ENCODE measurements at regions of chr18 and their contacts with region 1.

Region 1: GRCh38 chr18:7177116-7177744 is 53.7 kb upstream of the LRRC30 start:
- DNase-seq: peak; percentile 85
- ATAC-seq: peak; percentile 100
- H3K4me3 ChIP-seq: no peak overlapping the region
- H3K27ac ChIP-seq: no peak overlapping the region
- H3K4me1 ChIP-seq: no peaks in the 10 kb centered on the region; the same call in 1 of the 2 replicates
- H3K27me3 ChIP-seq: no peaks in the 10 kb centered on the region; the same call in 1 of the 2 replicates
- CTCF ChIP-seq: peak; percentile 80
- POLR2A ChIP-seq: no peak
- RAD21 ChIP-seq: peak; percentile 91

Region 2: GRCh38 chr18:5879479-5879882 is 1297.7 kb before region 1 on chr18:
- CTCF ChIA-PET with region 1: no interaction called
- POLR2A ChIA-PET with region 1: no interaction called
- dilution Hi-C with region 1: no loop called
- in situ Hi-C with region 1: no loop called
- intact Hi-C with region 1: loop called (anchors 10 kb)
- DNase-seq: peak; percentile 65
- ATAC-seq: peak; percentile 89
- H3K4me3 ChIP-seq: no peak overlapping the region
- H3K27ac ChIP-seq: no peak overlapping the region
- H3K4me1 ChIP-seq: no peaks in the 10 kb centered on the region
- H3K27me3 ChIP-seq: peaks cover 3% of the 10 kb centered on the region
- CTCF ChIP-seq: peak; percentile 93
- POLR2A ChIP-seq: no peak
- RAD21 ChIP-seq: peak; percentile 93

Region 3: DNA sequence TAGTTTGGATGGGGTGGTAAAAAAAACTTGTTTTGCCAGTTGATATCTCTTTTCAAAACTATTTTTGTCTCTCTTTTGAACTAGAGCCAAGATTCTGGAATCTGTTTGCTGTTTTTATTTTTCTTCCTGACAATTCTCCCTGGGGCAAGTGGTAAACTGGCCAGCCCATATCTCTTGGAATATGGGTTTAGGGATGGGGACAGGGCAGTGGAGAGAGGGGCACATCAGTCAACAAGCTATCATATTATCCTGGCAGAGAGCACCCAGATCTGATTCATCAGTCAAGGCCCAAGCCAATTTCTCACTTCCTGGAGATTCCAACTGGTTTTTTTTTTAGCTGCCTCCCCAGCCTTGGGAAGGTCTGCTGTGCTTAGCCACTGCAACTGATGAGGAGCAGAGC is 395.4 kb before region 1 on chr18:
- CTCF ChIA-PET with region 1: no interaction called
- POLR2A ChIA-PET with region 1: no interaction called
- dilution Hi-C with region 1: no loop called
- in situ Hi-C with region 1: no loop called
- intact Hi-C with region 1: no loop called
- DNase-seq: peak; percentile 65
- ATAC-seq: peak; percentile 56
- H3K4me3 ChIP-seq: no peak overlapping the region
- H3K27ac ChIP-seq: peak overlapping the region; percentile 77; the same call in 1 of the 2 replicates
- H3K4me1 ChIP-seq: peaks cover 26% of the 10 kb centered on the region
- H3K27me3 ChIP-seq: no peaks in the 10 kb centered on the region
- CTCF ChIP-seq: no peak
- POLR2A ChIP-seq: no peak
- RAD21 ChIP-seq: no peak

Region 4: GRCh38 chr18:6920099-6920899 is 256.9 kb before region 1 on chr18:
- CTCF ChIA-PET with region 1: interaction called, 3 read pairs
- POLR2A ChIA-PET with region 1: no interaction called
- dilution Hi-C with region 1: no loop called
- in situ Hi-C with region 1: loop called (anchors 5 kb)
- intact Hi-C with region 1: loop called (anchors 1 kb)
- DNase-seq: peak; percentile 68
- ATAC-seq: peak; percentile 85
- H3K4me3 ChIP-seq: no peak overlapping the region
- H3K27ac ChIP-seq: no peak overlapping the region
- H3K4me1 ChIP-seq: no peaks in the 10 kb centered on the region
- H3K27me3 ChIP-seq: no peaks in the 10 kb centered on the region; the same call in 1 of the 2 replicates
- CTCF ChIP-seq: peak; percentile 82
- POLR2A ChIP-seq: no peak
- RAD21 ChIP-seq: peak; percentile 76

Region 5: DNA sequence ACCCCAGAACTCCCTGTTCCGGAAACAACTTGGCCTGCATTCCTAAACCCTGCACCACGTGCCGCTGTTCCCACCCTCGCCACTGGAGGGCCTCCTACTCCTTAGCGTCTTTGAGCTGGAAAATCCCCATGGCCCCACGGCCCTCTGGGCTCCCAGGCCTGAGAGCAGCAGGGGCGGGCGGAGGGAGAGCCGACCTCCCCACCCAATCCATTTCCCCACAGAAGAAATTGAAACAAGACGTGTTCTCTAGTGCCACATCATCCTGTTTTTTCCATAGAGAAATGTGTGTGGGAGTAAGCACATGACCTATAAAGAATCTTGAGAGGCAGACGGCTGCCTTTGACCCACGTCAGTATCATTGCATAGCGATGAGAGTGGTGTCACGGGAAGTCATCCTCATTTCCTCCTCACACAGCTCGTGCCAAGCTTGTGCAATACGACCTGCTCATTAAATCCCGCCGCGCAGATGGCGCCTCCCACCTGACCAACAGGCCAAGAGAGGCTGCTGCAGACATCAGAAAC is 138.8 kb before region 1 on chr18:
- CTCF ChIA-PET with region 1: interaction called, 21 read pairs
- POLR2A ChIA-PET with region 1: no interaction called
- dilution Hi-C with region 1: no loop called
- in situ Hi-C with region 1: loop called (anchors 5 kb)
- intact Hi-C with region 1: loop called (anchors 1 kb)
- DNase-seq: peak; percentile 99
- ATAC-seq: peak; percentile 96
- H3K4me3 ChIP-seq: peak overlapping the region; percentile 2; the same call in 1 of the 2 replicates
- H3K27ac ChIP-seq: peak overlapping the region; percentile 93
- H3K4me1 ChIP-seq: peaks cover 10% of the 10 kb centered on the region
- H3K27me3 ChIP-seq: no peaks in the 10 kb centered on the region
- CTCF ChIP-seq: peak; percentile 89
- POLR2A ChIP-seq: no peak
- RAD21 ChIP-seq: peak; percentile 82

Region 6: GRCh38 chr18:7117390-7118355 is 59.6 kb before region 1 on chr18 and contains the start of gene LAMA1:
- CTCF ChIA-PET with region 1: no interaction called
- POLR2A ChIA-PET with region 1: no interaction called
- dilution Hi-C with region 1: no loop called
- in situ Hi-C with region 1: no loop called
- intact Hi-C with region 1: loop called (anchors 2 kb)
- DNase-seq: peak; percentile 10
- ATAC-seq: peak; percentile 89
- H3K4me3 ChIP-seq: peak within 1 kb of the TSS; percentile 65
- H3K27ac ChIP-seq: no peak within 1 kb of the TSS; the same call in 1 of the 2 replicates
- H3K4me1 ChIP-seq: 0 out of 2 replicates have a peak, but pooled peaks cover 2% of the 10 kb centered on the region
- H3K27me3 ChIP-seq: peaks cover 3% of the 10 kb centered on the region; the same call in 1 of the 2 replicates
- CTCF ChIP-seq: no peak
- POLR2A ChIP-seq: no peak
- RAD21 ChIP-seq: no peak
- total RNA-seq, gene LAMA1: 10.9 and 11.4 TPM in 2 replicates

Region 7: DNA sequence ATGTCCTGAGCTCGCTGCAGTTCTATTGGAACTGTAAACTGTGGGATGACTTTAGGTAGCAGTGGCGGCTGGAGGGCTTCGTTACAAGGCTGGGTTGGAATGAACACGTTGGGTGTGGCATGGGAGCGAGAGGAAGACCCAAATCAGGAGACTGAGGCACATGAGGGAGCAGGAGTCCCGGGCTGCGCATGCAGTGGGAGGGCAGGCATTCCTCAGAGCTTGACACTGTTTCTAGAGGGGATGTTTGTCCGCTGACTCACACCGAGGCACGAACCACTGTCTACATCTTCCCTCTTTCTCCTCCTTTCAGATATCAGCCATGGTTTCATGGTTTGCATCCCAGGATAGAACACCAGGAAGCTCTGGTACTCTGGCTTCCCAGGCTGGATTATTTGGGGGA is 19.0 kb before region 1 on chr18:
- CTCF ChIA-PET with region 1: interaction called, 4 read pairs
- POLR2A ChIA-PET with region 1: interaction called, 10 read pairs
- dilution Hi-C with region 1: no loop called
- in situ Hi-C with region 1: no loop called
- intact Hi-C with region 1: no loop called
- DNase-seq: peak; percentile 79
- ATAC-seq: peak; percentile 90
- H3K4me3 ChIP-seq: no peak overlapping the region
- H3K27ac ChIP-seq: no peak overlapping the region
- H3K4me1 ChIP-seq: peaks cover 11% of the 10 kb centered on the region
- H3K27me3 ChIP-seq: no peaks in the 10 kb centered on the region
- CTCF ChIP-seq: no peak
- POLR2A ChIP-seq: no peak
- RAD21 ChIP-seq: no peak

Measured in IMR-90 (cell line).